CD8-positive, alpha-beta memory T cell (primary cell): ENCODE measurements at regions of chr21 and their contacts with region 1.

Region 1: GRCh38 chr21:27141776-27142175 is 174.9 kb upstream of the ADAMTS5 start:
- DNase-seq: no peak
- H3K4me3 ChIP-seq: no peak overlapping the region
- H3K4me3 Mint-ChIP-seq: no peak overlapping the region
- H3K27ac ChIP-seq: no peak overlapping the region
- H3K27ac Mint-ChIP-seq: no peak overlapping the region
- H3K4me1 ChIP-seq: no peaks in the 10 kb centered on the region
- H3K4me1 Mint-ChIP-seq: no peaks in the 10 kb centered on the region
- H3K27me3 ChIP-seq: no peaks in the 10 kb centered on the region
- H3K27me3 Mint-ChIP-seq: no peaks in the 10 kb centered on the region

Region 2: GRCh38 chr21:27024261-27024660 is 117.5 kb before region 1 on chr21:
- CTCF ChIA-PET with region 1: no interaction called
- POLR2A ChIA-PET with region 1: no interaction called
- DNase-seq: no peak
- H3K4me3 ChIP-seq: no peak overlapping the region
- H3K4me3 Mint-ChIP-seq: no peak overlapping the region
- H3K27ac ChIP-seq: no peak overlapping the region
- H3K27ac Mint-ChIP-seq: no peak overlapping the region
- H3K4me1 ChIP-seq: no peaks in the 10 kb centered on the region
- H3K4me1 Mint-ChIP-seq: no peaks in the 10 kb centered on the region
- H3K27me3 ChIP-seq: no peaks in the 10 kb centered on the region
- H3K27me3 Mint-ChIP-seq: peaks cover 0 to 1% of the 10 kb centered on the region in 2 donors

Region 3: GRCh38 chr21:27448960-27449359 is 307.2 kb after region 1 on chr21:
- CTCF ChIA-PET with region 1: no interaction called
- POLR2A ChIA-PET with region 1: interaction called, 12 read pairs
- DNase-seq: no peak
- H3K4me3 ChIP-seq: no peak overlapping the region
- H3K4me3 Mint-ChIP-seq: no peak overlapping the region
- H3K27ac ChIP-seq: no peak overlapping the region
- H3K27ac Mint-ChIP-seq: no peak overlapping the region
- H3K4me1 ChIP-seq: no peaks in the 10 kb centered on the region
- H3K4me1 Mint-ChIP-seq: no peaks in the 10 kb centered on the region
- H3K27me3 ChIP-seq: no peaks in the 10 kb centered on the region
- H3K27me3 Mint-ChIP-seq: peaks cover 0 to 1% of the 10 kb centered on the region in 2 donors